Psoas muscle (tissue), 8 donors: ENCODE measurements at regions of chr5 and their contacts with region 1.

Region 1: DNA sequence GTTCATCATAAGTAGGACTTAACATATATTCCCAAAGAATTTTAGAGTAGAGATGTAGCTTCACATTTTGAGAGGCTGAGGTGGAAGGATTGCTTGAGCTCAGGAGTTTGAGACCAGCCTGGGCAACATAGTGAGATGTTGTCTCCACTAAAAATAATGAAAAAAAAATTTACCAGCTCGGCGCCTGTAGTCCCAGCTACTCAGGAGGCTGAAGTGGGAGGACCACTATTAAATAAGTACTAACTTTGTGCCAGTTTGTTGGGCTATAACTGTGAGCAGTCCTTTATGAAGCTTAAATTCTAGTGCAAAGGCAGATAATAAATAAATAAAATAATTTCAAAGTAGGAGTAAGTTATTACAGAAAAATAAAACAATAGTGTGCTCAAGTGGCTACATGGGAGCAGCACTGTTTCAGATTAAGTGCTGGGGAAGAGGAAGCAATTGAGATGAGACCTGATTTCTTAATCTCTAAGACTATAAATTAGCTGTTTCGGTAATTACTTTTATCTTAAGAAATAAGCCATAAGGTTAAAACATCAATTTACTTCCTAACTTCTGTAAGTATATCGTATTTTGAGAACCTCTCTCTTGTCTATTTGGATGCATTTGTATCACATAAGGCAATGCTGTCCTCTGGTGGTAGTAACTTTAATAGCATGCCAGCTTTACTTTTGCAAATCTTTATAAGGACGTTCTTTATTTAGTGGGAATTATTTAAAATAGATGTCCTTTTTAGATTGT is 98.9 kb downstream of the CSNK1G3 start:
- DNase-seq: no peak
- ATAC-seq: peak; percentile 60 to 88 (median 65)
- H3K4me3 ChIP-seq: no peak overlapping the region
- H3K27ac ChIP-seq: no peak overlapping the region
- H3K4me1 ChIP-seq: no peaks in the 10 kb centered on the region
- H3K27me3 ChIP-seq: no peaks in the 10 kb centered on the region
- CTCF ChIP-seq: peak; percentile 99

Region 2: GRCh38 chr5:123511648-123512605 is 98.9 kb before region 1 on chr5 and contains the start of gene CSNK1G3:
- intact Hi-C with region 1: loop called in 1 of 2 experiments (anchors 10 kb)
- DNase-seq: peak; percentile 97 to 98
- ATAC-seq: peak; percentile 97 to 99 (median 98)
- H3K4me3 ChIP-seq: peak within 1 kb of the TSS; percentile 88
- H3K27ac ChIP-seq: peak within 1 kb of the TSS; percentile 91
- H3K4me1 ChIP-seq: peaks cover 6% of the 10 kb centered on the region
- H3K27me3 ChIP-seq: no peaks in the 10 kb centered on the region
- CTCF ChIP-seq: no peak
- total RNA-seq, gene CSNK1G3: 11.3 to 19.4 (median 16.2) TPM